Activated CD4-positive, alpha-beta T cell treated with anti-CD3 and anti-CD28 coated beads for 36 hours (primary cell): ENCODE measurements at regions of chr2 and their contacts with region 1.

Region 1: DNA sequence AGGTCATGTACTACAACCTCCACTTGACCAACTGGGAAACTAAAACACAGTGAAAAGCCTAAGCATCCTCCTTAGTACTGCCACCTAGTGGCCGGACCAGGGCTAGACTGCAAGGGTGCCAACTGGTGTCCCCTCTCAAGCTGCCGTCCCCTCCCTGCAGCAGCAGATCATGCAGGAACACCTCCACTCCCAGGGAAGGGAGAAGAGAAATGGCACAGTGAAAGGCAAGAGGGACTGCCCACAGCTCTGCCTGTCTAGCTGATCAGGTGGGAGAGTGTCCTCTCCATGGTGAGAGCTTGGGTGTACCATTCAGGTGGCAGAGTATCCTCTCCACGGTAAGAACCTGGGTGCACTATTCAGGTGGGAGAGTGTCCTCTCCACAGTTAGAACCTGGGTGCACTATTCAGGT is 78.1 kb downstream of the AAK1 start:
- DNase-seq: peak; percentile 83
- ATAC-seq: peak; percentile 78
- H3K4me3 Mint-ChIP-seq: no peak overlapping the region
- H3K27ac Mint-ChIP-seq: peak overlapping the region; percentile 52
- H3K4me1 Mint-ChIP-seq: peaks cover 93% of the 10 kb centered on the region
- H3K27me3 Mint-ChIP-seq: no peaks in the 10 kb centered on the region

Region 2: GRCh38 chr2:69525261-69525660 is 40.2 kb before region 1 on chr2:
- CTCF ChIA-PET with region 1: interaction called, 11 read pairs
- POLR2A ChIA-PET with region 1: no interaction called
- intact Hi-C with region 1: no loop called
- DNase-seq: no peak
- ATAC-seq: no peak
- H3K4me3 Mint-ChIP-seq: no peak overlapping the region
- H3K27ac Mint-ChIP-seq: no peak overlapping the region
- H3K4me1 Mint-ChIP-seq: no peaks in the 10 kb centered on the region
- H3K27me3 Mint-ChIP-seq: no peaks in the 10 kb centered on the region

Region 3: GRCh38 chr2:69581774-69582581 is 16.5 kb after region 1 on chr2:
- CTCF ChIA-PET with region 1: interaction called, 189 read pairs
- POLR2A ChIA-PET with region 1: no interaction called
- intact Hi-C with region 1: no loop called
- DNase-seq: peak; percentile 21
- ATAC-seq: no peak
- H3K4me3 Mint-ChIP-seq: peak overlapping the region; percentile 52
- H3K27ac Mint-ChIP-seq: peak overlapping the region; percentile 78
- H3K4me1 Mint-ChIP-seq: peaks cover 90% of the 10 kb centered on the region
- H3K27me3 Mint-ChIP-seq: no peaks in the 10 kb centered on the region

Region 4: DNA sequence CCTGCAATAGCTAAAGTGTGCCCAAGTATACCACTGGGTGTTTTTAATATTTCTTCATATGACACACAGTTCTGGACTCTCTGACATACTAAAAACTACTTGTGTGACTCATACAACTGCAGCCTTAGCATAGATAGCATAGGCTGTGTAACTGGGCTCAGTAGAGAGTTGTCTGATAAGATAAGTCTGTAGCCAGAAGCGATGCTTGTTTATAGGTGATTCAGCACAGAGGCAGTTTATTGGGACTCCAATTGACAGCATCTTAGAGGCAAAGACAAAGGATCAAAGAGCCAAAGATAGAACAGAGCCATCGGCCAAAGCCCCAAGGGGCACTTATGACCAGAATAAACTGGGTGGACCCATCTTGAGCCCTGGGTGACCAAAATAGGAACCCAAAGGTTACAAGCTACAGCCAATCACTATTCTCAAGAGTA is 35.8 kb after region 1 on chr2:
- CTCF ChIA-PET with region 1: interaction called, 11 read pairs
- POLR2A ChIA-PET with region 1: interaction called, 4 read pairs
- intact Hi-C with region 1: no loop called
- DNase-seq: no peak
- ATAC-seq: peak; percentile 93
- H3K4me3 Mint-ChIP-seq: no peak overlapping the region
- H3K27ac Mint-ChIP-seq: peak overlapping the region; percentile 82
- H3K4me1 Mint-ChIP-seq: peaks cover 93% of the 10 kb centered on the region
- H3K27me3 Mint-ChIP-seq: no peaks in the 10 kb centered on the region

Region 5: GRCh38 chr2:69628325-69629021 is 63.0 kb after region 1 on chr2:
- CTCF ChIA-PET with region 1: interaction called, 28 read pairs
- POLR2A ChIA-PET with region 1: no interaction called
- intact Hi-C with region 1: no loop called
- DNase-seq: peak; percentile 43
- ATAC-seq: peak; percentile 83
- H3K4me3 Mint-ChIP-seq: no peak overlapping the region
- H3K27ac Mint-ChIP-seq: no peak overlapping the region
- H3K4me1 Mint-ChIP-seq: peaks cover 32% of the 10 kb centered on the region
- H3K27me3 Mint-ChIP-seq: no peaks in the 10 kb centered on the region